ENCODE measurements at regions of chr2 and their contacts with region 1.

Region 1: DNA sequence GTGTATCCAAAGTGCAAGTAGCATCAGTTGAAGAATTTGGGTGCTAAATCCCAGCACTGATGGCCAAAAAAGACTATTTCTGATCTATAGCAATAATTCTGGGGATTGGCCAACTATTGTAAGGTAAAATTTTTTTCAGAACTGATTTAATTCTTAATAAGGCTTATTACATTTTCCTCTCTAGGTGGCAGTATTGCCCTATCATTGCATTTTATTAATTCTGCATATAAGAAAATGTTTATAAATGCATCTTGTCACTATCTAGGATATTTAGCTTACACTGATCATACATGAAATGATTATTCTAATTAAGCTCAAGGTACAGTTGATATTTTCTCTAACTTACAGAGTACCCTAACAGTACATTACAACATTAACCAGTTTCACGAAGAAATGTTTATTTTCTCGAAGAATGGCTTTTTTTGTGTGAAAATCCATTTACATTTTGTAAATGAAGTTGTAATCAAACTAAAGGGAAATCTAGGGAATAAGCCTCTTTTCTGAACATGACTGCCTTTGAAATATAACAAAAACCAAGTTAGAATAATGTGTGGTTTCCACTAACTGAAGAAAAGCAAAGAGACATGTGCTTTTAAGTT is 11.0 kb downstream of the TTN start:
- DNase-seq: peak in 1 of 2 experiments; percentile 54
- H3K4me3 ChIP-seq: no peak overlapping the region
- H3K4me1 ChIP-seq: 0 out of 2 replicates have a peak, but pooled peaks cover 3% of the 10 kb centered on the region
- H3K27me3 ChIP-seq: no peaks in the 10 kb centered on the region

Region 2: GRCh38 chr2:178914259-178914849 is 118.2 kb after region 1 on chr2:
- in situ Hi-C with region 1: loop called (anchors 10 kb)
- DNase-seq: peak; percentile 73 to 86
- H3K4me3 ChIP-seq: no peak overlapping the region
- H3K4me1 ChIP-seq: peaks cover 31% of the 10 kb centered on the region
- H3K27me3 ChIP-seq: no peaks in the 10 kb centered on the region

Measured in HAP-1 (cell line).